ENCODE measurements at regions of chr7 and their contacts with region 1.

Region 1: DNA sequence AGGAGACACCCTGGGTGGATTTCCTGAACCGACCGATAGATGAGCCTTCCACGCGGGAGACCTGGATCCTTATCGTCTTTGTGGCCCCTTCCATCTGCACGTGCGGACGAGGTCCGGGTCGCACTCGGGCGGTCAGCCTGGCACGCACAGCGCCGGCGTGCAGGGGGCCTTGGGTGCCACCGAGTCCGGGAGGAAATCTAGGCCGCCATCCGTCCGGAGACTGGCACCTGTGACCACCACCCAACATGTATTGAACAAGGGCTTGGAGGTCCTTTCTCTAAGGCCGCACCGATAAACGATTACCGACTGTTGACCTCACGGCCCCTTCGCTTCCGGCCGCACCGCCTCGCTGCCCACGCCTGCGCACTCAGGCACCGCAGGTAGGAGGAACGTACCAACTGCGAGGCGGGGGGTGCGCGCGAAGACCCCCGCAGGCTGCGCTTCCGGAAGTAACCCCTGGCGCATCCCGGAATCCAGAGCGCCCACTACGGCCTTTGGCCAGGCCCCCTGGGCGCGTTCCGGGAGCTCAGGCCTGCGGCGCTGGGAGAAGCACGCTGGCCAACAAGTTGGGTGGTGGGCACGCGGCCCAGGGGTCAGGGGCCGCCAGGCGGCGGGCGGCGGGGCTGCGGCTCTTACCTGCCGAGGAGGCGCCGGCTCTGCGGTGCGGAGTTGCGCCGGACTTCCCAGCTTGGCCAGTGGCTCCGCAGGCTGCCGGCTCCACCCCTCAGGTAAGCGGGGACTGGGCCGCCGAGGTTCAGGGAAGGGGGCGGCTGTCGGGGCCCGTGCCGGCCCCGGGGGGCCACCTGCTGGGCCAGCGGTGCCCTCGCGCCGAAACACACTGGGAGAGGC is at the starts of genes ACTR3C and LRRC61:
- DNase-seq: peak; percentile 64
- H3K4me3 Mint-ChIP-seq: peak within 1 kb of the TSS; percentile 97
- H3K27ac Mint-ChIP-seq: peak within 1 kb of the TSS; percentile 99
- H3K4me1 Mint-ChIP-seq: peaks cover 62% of the 10 kb centered on the region
- H3K27me3 Mint-ChIP-seq: no peaks in the 10 kb centered on the region
- total RNA-seq, gene ACTR3C: 8.2 and 9.8 TPM in 2 replicates
- total RNA-seq, gene LRRC61: 24.9 and 26.1 TPM in 2 replicates

Region 2: GRCh38 chr7:149633976-149634945 is 688.8 kb before region 1 on chr7:
- intact Hi-C with region 1: no loop called
- DNase-seq: no peak
- H3K4me3 Mint-ChIP-seq: no peak overlapping the region
- H3K27ac Mint-ChIP-seq: no peak overlapping the region
- H3K4me1 Mint-ChIP-seq: no peaks in the 10 kb centered on the region
- H3K27me3 Mint-ChIP-seq: peaks cover 11% of the 10 kb centered on the region

Region 3: DNA sequence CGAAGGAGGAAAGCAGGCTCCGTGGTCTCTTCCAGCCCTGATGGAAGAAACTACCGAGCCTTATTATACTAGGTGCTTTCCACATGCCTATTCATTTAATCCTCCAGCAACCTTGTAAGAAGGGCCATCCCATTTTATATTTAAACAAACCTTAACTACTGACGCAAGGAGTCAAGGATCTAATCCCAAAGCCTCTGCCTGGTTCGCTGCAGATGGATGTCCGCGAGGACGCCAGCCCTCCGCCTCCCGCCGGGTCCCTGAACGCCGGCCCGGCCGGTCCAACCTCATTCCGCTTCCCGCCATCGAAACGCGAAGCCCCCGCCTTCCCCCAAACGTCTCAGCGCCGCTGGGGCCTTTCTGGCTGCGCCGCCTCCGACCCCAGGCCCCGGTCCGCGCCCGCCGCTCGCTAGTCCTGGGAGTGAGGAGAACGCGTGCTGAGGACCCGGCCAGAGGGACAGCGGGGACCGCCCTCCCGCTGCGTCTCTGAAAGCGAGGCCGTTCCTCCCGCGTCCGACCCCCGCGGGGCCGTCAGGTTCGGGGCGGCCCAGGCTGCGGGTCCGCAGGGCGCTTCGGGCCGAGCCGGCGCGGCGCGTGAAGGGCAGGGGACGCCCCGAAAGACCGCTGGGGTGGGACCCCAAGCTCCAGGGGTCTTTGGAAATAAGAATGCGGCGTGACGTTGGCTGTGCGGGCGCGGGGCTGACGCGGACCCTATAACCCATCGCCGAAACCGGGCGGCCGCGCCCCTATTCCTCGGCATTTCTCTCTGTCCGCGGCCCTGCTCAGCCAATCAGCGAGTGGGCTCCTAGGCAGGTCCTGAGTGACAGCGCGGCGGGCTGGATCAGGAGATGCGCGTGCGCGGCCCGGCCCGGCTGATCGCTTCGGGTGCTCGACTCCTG is 449.7 kb before region 1 on chr7 and contains the start of gene ATP6V0E2:
- intact Hi-C with region 1: loop called (anchors 2 kb)
- DNase-seq: peak; percentile 92
- H3K4me3 Mint-ChIP-seq: peak within 1 kb of the TSS; percentile 90
- H3K27ac Mint-ChIP-seq: peak within 1 kb of the TSS; percentile 92
- H3K4me1 Mint-ChIP-seq: peaks cover 75% of the 10 kb centered on the region
- H3K27me3 Mint-ChIP-seq: no peaks in the 10 kb centered on the region
- total RNA-seq, gene ATP6V0E2: 47.5 and 51.2 TPM in 2 replicates

Region 4: GRCh38 chr7:150378853-150379440 is 55.9 kb after region 1 on chr7 and contains the start of gene ZNF775:
- intact Hi-C with region 1: loop called (anchors 1 kb)
- DNase-seq: peak; percentile 93
- H3K4me3 Mint-ChIP-seq: peak within 1 kb of the TSS; percentile 90
- H3K27ac Mint-ChIP-seq: peak within 1 kb of the TSS; percentile 83
- H3K4me1 Mint-ChIP-seq: peaks cover 59% of the 10 kb centered on the region
- H3K27me3 Mint-ChIP-seq: no peaks in the 10 kb centered on the region
- total RNA-seq, gene ZNF775: 3.9 and 4.5 TPM in 2 replicates

Region 5: GRCh38 chr7:150668472-150668911 is 345.4 kb after region 1 on chr7:
- intact Hi-C with region 1: loop called (anchors 5 kb)
- DNase-seq: peak; percentile 74
- H3K4me3 Mint-ChIP-seq: peak overlapping the region; percentile 74
- H3K27ac Mint-ChIP-seq: peak overlapping the region; percentile 91
- H3K4me1 Mint-ChIP-seq: peaks cover 94% of the 10 kb centered on the region
- H3K27me3 Mint-ChIP-seq: no peaks in the 10 kb centered on the region

Region 6: GRCh38 chr7:151057989-151058780 is 735.1 kb after region 1 on chr7:
- intact Hi-C with region 1: loop called (anchors 1 kb)
- DNase-seq: peak; percentile 95
- H3K4me3 Mint-ChIP-seq: peak overlapping the region; percentile 93
- H3K27ac Mint-ChIP-seq: peak overlapping the region; percentile 92
- H3K4me1 Mint-ChIP-seq: peaks cover 46% of the 10 kb centered on the region
- H3K27me3 Mint-ChIP-seq: no peaks in the 10 kb centered on the region

Measured in activated T-helper 1 cell treated with anti-CD3 and anti-CD28 coated beads, Interleukin-12 subunit alpha, Interleukin-12 subunit beta, Interleukin-2, Interleukin-4 antibody, amounts not matched to agents 30 ng/mL and 10 ng/mL and 1 ng/mL, durations not matched to agents 14 hours and 24 hours and 36 hours (primary cell).